Activated naive CD4-positive, alpha-beta T cell treated with anti-CD3 and anti-CD28 coated beads for 36 hours (primary cell): ENCODE measurements at regions of chr6 and their contacts with region 1.

Region 1: DNA sequence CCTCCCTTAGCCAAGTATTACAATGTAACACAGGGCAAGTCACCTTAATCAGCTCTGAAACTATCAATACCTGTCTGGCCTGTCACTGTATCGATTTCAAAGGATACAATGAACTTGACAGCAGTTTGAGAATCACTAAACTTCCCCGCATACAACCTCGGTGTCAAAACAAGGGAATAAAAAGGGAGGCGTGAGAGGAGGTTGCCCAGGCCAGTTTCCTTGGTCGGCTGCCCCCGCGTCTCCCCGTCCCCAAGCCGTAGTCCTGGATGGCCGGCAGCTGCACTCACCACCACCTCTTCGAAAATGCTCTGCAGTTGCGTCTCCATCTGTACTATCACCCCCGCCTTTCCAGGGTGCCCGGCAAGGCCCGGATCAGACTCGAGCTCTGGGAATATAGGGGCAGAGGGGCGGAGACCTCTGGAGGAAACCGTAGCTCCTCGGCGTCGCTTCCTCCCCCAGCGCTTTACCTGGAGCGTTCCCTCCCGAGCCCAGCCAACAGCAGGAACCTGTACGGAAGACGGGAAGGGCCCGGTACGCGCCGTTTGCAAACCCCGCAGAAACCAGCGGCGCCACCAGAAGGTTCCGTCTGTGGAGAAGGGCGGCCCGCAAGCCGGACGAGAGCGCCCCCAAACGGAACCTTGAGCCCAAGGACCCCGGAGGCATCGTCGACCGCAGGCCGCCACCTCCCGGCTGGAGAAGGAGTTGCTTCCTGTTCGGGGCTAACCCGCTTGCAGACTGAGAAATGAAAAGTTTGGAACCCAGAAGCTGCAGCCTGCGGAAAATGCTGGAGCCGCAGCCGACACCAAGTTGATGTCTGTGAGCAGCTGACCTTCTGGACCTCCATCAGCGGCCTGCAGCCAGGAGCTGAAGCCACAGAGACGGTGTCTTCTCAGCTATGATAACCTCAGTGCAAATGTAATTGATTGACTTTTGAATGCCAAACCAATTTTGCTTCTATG is at the start of gene MED23:
- DNase-seq: peak; percentile 96
- H3K4me3 Mint-ChIP-seq: peak within 1 kb of the TSS; percentile 99
- H3K27ac Mint-ChIP-seq: peak within 1 kb of the TSS; percentile 92
- H3K4me1 Mint-ChIP-seq: peaks cover 29% of the 10 kb centered on the region
- H3K27me3 Mint-ChIP-seq: no peaks in the 10 kb centered on the region
- total RNA-seq, gene MED23: 27.4 to 28.8 TPM

Region 2: GRCh38 chr6:131135244-131136020 is 492.6 kb before region 1 on chr6 and contains the start of gene AKAP7:
- CTCF ChIA-PET with region 1: no interaction called
- intact Hi-C with region 1: loop called (anchors 1 kb)
- DNase-seq: peak; percentile 67
- H3K4me3 Mint-ChIP-seq: peak within 1 kb of the TSS; percentile 85
- H3K27ac Mint-ChIP-seq: peak within 1 kb of the TSS; percentile 83
- H3K4me1 Mint-ChIP-seq: peaks cover 13% of the 10 kb centered on the region
- H3K27me3 Mint-ChIP-seq: no peaks in the 10 kb centered on the region
- total RNA-seq, gene AKAP7: 7.3 to 7.5 TPM

Region 3: DNA sequence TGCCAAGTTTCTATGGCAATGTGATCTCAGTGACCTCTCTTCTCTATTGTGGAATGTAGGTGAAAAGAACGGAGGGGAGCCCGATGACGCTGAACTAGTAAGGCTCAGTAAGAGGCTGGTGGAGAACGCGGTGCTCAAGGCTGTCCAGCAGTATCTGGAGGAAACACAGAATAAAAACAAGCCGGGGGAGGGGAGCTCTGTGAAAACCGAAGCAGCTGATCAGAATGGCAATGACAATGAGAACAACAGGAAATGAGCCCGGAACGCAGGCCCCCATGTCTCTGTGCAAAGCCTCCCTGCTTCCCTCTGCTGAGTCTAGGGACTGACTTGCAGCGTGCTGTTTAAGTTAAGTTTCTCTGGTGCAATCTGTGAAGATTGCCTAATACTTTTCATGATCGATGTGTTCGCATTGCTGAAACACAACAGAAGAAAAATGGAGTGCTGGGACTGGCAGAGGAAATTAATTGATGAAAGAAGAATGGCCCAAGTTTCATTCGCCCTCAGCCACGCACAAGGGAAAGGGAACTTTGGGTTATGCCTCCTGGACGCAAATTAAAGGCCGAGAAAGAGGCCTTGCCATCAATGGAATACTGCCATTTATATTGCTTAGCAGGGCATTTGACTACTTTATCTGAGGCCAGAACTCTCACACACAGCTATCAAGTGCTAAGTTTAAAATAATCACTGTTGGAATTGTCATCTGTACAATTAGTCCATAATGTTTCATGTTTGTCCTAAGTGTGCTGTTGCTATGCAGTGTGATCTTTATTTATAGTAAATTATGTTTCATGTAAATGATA is 346.3 kb before region 1 on chr6:
- CTCF ChIA-PET with region 1: no interaction called
- intact Hi-C with region 1: loop called (anchors 2 kb)
- DNase-seq: peak; percentile 84
- H3K4me3 Mint-ChIP-seq: peak overlapping the region; percentile 75
- H3K27ac Mint-ChIP-seq: peak overlapping the region; percentile 96
- H3K4me1 Mint-ChIP-seq: peaks cover 48% of the 10 kb centered on the region
- H3K27me3 Mint-ChIP-seq: no peaks in the 10 kb centered on the region

Region 4: GRCh38 chr6:131597446-131597845 is 30.6 kb before region 1 on chr6:
- CTCF ChIA-PET with region 1: interaction called, 12 read pairs
- intact Hi-C with region 1: no loop called
- DNase-seq: no peak
- H3K4me3 Mint-ChIP-seq: no peak overlapping the region
- H3K27ac Mint-ChIP-seq: no peak overlapping the region
- H3K4me1 Mint-ChIP-seq: no peaks in the 10 kb centered on the region
- H3K27me3 Mint-ChIP-seq: no peaks in the 10 kb centered on the region

Region 5: GRCh38 chr6:131654326-131654725 is 26.3 kb after region 1 on chr6:
- CTCF ChIA-PET with region 1: interaction called, 15 read pairs
- intact Hi-C with region 1: no loop called
- DNase-seq: no peak
- H3K4me3 Mint-ChIP-seq: no peak overlapping the region
- H3K27ac Mint-ChIP-seq: no peak overlapping the region
- H3K4me1 Mint-ChIP-seq: peaks cover 2% of the 10 kb centered on the region
- H3K27me3 Mint-ChIP-seq: no peaks in the 10 kb centered on the region